Caco-2 (cell line): ENCODE measurements at regions of chr3 and their contacts with region 1.

Region 1: DNA sequence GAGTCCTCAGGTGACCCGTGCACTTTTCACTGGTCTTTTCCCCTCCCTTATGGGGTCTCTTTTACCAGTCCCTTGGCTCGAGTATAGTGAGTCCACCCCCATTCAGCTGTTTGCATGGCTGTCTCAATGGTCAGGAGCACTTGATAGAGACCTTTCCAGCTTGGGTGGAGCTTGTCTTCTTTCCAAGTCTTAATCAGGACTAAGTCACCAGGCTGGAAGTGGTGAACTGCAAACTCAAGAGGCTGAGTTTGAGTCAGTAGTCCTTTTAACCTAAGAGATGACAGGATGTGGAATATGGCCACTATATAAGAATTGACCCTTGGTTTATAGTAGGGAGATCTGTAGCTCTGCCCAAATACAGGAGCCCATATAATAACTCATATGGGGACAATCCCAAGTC is 279.7 kb downstream of the PYDC2 start:
- DNase-seq: no peak
- H3K4me3 ChIP-seq: no peak overlapping the region
- H3K4me3 Mint-ChIP-seq: no peak overlapping the region
- H3K27ac Mint-ChIP-seq: peak overlapping the region; percentile 45
- H3K4me1 ChIP-seq: peaks cover 59% of the 10 kb centered on the region
- H3K4me1 Mint-ChIP-seq: peaks cover 29% of the 10 kb centered on the region
- H3K27me3 ChIP-seq: no peaks in the 10 kb centered on the region
- H3K27me3 Mint-ChIP-seq: no peaks in the 10 kb centered on the region
- CTCF ChIP-seq: no peak

Region 2: DNA sequence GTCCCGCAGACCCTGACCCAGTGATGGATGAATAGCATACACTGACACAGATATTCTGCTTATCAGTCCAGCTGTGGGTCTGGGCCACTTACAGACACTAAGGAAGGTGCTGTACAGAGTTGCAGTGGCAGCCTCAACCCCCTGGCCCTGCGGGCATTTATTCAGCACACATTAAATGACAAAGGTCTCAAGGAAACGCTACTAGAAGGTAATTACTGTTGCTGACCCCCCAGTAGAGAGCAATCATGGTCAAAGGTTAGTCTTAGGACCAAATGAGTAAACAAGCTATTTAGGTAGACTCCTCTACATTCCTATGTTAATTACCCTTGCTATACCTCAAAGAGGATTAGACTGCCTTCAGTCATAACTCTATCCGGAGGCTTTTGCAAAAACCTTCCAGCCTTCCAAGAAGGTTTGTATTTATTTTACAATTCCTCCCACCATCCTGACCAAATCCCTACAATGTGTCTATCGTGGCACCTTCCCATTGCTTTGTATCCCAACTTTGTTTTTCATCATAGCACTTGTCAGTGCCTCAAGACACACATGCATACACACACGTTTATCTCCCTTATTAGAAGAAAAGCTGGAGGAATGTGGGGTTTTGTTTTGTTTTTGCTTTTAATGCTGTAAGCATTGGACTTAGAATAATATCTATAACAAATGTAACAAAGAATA is 51.8 kb before region 1 on chr3:
- CTCF ChIA-PET with region 1: no interaction called
- POLR2A ChIA-PET with region 1: no interaction called
- intact Hi-C with region 1: loop called (anchors 5 kb)
- DNase-seq: no peak
- H3K4me3 ChIP-seq: no peak overlapping the region
- H3K4me3 Mint-ChIP-seq: no peak overlapping the region
- H3K27ac Mint-ChIP-seq: no peak overlapping the region
- H3K4me1 ChIP-seq: peaks cover 13% of the 10 kb centered on the region
- H3K4me1 Mint-ChIP-seq: peaks cover 20% of the 10 kb centered on the region
- H3K27me3 ChIP-seq: no peaks in the 10 kb centered on the region
- H3K27me3 Mint-ChIP-seq: no peaks in the 10 kb centered on the region
- CTCF ChIP-seq: no peak

Region 3: GRCh38 chr3:191727338-191727737 is 13.4 kb before region 1 on chr3:
- CTCF ChIA-PET with region 1: no interaction called
- POLR2A ChIA-PET with region 1: no interaction called
- intact Hi-C with region 1: no loop called
- DNase-seq: no peak
- H3K4me3 ChIP-seq: no peak overlapping the region
- H3K4me3 Mint-ChIP-seq: no peak overlapping the region
- H3K27ac Mint-ChIP-seq: no peak overlapping the region
- H3K4me1 ChIP-seq: peaks cover 16% of the 10 kb centered on the region
- H3K4me1 Mint-ChIP-seq: peaks cover 7% of the 10 kb centered on the region
- H3K27me3 ChIP-seq: no peaks in the 10 kb centered on the region
- H3K27me3 Mint-ChIP-seq: no peaks in the 10 kb centered on the region
- CTCF ChIP-seq: no peak

Region 4: DNA sequence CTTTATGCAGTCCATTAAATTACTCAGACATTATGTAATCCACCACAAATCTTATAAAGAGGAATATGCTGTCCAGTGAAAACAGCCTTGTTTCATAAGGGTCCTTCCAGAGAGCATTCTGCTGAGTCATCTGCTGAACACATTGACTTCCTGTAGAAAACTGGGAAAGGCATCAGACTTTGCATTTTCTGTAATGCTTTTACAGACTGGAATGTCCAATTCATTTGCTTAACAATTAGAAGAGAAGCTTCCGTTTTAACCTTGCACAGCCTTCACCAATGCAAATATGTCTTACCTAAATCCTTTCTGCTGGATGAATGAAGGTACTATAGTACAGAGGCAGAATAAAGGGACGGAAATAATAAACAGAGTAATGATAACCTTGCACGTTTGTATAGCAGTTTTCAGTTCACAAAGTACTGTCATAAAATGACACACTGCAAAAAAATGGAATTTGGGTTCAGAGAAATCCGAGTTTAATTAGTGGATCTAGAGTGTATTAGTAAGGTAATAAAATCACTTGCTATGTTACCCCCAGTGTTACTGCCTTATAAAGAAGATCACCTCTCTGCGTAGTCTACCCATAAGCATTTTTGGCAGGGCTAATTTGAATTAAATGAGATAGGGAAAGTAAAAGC is 21.7 kb after region 1 on chr3:
- CTCF ChIA-PET with region 1: no interaction called
- POLR2A ChIA-PET with region 1: no interaction called
- intact Hi-C with region 1: loop called (anchors 2 kb)
- DNase-seq: no peak
- H3K4me3 ChIP-seq: no peak overlapping the region
- H3K4me3 Mint-ChIP-seq: no peak overlapping the region
- H3K27ac Mint-ChIP-seq: peak overlapping the region; percentile 57
- H3K4me1 ChIP-seq: peaks cover 12% of the 10 kb centered on the region
- H3K4me1 Mint-ChIP-seq: no peaks in the 10 kb centered on the region
- H3K27me3 ChIP-seq: no peaks in the 10 kb centered on the region
- H3K27me3 Mint-ChIP-seq: no peaks in the 10 kb centered on the region
- CTCF ChIP-seq: no peak

Region 5: GRCh38 chr3:192082730-192083660 is 342.3 kb after region 1 on chr3:
- CTCF ChIA-PET with region 1: no interaction called
- POLR2A ChIA-PET with region 1: no interaction called
- intact Hi-C with region 1: loop called (anchors 10 kb)
- DNase-seq: no peak
- H3K4me3 ChIP-seq: no peak overlapping the region
- H3K4me3 Mint-ChIP-seq: no peak overlapping the region
- H3K27ac Mint-ChIP-seq: no peak overlapping the region
- H3K4me1 ChIP-seq: peaks cover 34% of the 10 kb centered on the region
- H3K4me1 Mint-ChIP-seq: peaks cover 8% of the 10 kb centered on the region
- H3K27me3 ChIP-seq: no peaks in the 10 kb centered on the region
- H3K27me3 Mint-ChIP-seq: no peaks in the 10 kb centered on the region
- CTCF ChIP-seq: no peak